Left cardiac atrium (tissue), 4 donors: ENCODE measurements at regions of chr18 and their contacts with region 1.

Region 1: GRCh38 chr18:67531929-67532328 is 15.4 kb upstream of the DSEL start:
- DNase-seq: no peak
- ATAC-seq: no peak

Region 2: DNA sequence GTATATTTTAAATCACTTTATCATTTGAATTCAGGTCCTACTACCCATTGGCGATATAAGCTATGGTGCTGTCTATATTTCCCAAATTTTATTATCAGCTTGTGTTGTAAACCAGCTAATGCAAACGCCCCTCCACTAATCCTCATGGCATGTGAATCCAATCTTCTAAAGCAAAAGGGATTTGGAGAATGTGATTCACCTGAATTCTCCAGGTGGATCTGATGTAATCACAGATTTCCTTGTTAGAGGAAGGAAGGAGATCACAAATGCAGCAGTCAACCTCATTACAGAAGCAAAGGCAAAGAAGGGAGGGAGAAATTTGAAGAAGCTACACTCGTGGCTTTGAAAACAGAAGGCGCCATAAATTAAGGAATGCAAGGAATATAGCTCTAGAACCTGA is 496.9 kb before region 1 on chr18:
- intact Hi-C with region 1: no loop called
- DNase-seq: no peak
- ATAC-seq: no peak

Region 3: DNA sequence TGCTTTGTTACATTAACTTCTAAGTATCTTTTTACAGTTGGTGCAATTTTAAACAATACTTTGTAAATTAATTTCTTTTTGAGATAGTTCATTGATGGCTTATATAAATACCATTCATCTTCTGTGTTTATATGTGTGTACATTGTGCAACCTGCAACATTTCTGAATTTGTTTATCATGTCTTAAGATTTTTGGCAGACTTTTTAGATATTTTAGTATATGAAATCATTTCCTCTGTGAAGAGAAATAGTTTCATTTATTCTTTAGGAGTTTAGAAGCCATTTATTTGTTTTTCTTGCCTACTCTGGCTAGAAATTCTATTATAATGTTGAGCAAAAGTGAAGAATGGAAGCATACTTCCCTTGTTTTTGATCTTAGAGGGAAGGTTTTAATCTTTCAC is 322.4 kb after region 1 on chr18:
- intact Hi-C with region 1: loop called in 1 of 2 experiments (anchors 10 kb)
- DNase-seq: no peak
- ATAC-seq: no peak

Region 4: GRCh38 chr18:68186039-68186438 is 654.1 kb after region 1 on chr18:
- intact Hi-C with region 1: no loop called
- DNase-seq: no peak
- ATAC-seq: no peak